ENCODE measurements at regions of chr15 and their contacts with region 1.

Region 1: GRCh38 chr15:27937851-27938250 is 161.3 kb downstream of the OCA2 start:
- DNase-seq: no peak
- ATAC-seq: no peak
- H3K4me3 ChIP-seq: no peak overlapping the region
- H3K4me3 Mint-ChIP-seq: no peak overlapping the region
- H3K27ac ChIP-seq: no peak overlapping the region
- H3K27ac Mint-ChIP-seq: no peak overlapping the region
- H3K4me1 ChIP-seq: no peaks in the 10 kb centered on the region
- H3K4me1 Mint-ChIP-seq: no peaks in the 10 kb centered on the region
- H3K27me3 ChIP-seq: no peaks in the 10 kb centered on the region
- H3K27me3 Mint-ChIP-seq: peaks cover 4% of the 10 kb centered on the region
- CTCF ChIP-seq: no peak

Region 2: GRCh38 chr15:29470311-29471193 is 1532.7 kb after region 1 on chr15:
- CTCF ChIA-PET with region 1: no interaction called
- POLR2A ChIA-PET with region 1: no interaction called
- intact Hi-C with region 1: loop called in 1 of 2 experiments (anchors 5 kb)
- DNase-seq: no peak
- ATAC-seq: no peak
- H3K4me3 ChIP-seq: no peak overlapping the region
- H3K4me3 Mint-ChIP-seq: no peak overlapping the region
- H3K27ac ChIP-seq: no peak overlapping the region
- H3K27ac Mint-ChIP-seq: no peak overlapping the region
- H3K4me1 ChIP-seq: no peaks in the 10 kb centered on the region
- H3K4me1 Mint-ChIP-seq: no peaks in the 10 kb centered on the region
- H3K27me3 ChIP-seq: no peaks in the 10 kb centered on the region
- H3K27me3 Mint-ChIP-seq: no peaks in the 10 kb centered on the region
- CTCF ChIP-seq: no peak

Measured in CD4-positive, alpha-beta T cell (primary cell).